MCF 10A (cell line): ENCODE measurements at regions of chr19 and their contacts with region 1.

Region 1: DNA sequence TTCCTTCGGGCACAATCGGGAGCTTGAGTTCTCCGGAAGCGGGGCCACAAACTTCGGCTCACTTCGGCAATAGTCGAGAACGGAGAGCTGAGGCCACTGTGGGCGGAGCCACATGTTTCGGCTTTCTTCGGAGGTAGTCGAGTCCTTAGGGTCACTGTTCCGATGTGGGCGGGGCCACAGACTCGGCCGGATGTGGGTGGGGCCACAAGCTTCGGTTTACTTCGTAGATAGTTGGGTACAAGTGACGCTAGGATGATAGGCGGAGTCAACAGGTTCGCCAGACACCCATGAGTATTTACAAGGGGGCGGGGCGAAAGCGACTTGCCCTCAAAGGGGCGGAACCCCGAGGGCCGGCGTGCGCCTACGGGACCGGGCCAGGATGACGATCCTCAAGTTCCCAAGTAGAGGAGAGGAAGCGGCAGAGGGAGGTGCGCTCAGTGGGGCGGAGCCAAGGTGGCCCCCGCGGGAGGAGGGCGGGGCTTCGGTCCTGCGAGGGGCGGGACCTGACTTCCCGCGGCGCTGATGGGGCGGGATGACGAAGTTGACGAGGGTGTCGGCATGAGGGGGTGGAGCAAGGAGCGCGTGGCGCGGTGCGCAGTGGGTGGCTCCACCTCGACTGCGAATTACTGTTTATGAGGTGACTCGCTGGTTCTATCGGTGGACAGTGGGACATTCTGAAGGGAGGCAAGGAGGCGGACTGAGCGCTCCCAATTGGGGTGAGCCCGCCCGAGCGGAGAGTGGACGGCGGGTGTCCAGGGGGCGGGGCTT is 539 bp upstream of the MBOAT7 start:
- DNase-seq: peak; percentile 100
- H3K4me3 Mint-ChIP-seq: peak overlapping the region; percentile 85
- H3K27ac Mint-ChIP-seq: peak overlapping the region; percentile 100
- H3K4me1 Mint-ChIP-seq: peaks cover 20% of the 10 kb centered on the region
- H3K27me3 Mint-ChIP-seq: no peaks in the 10 kb centered on the region
- CTCF ChIP-seq: no peak

Region 2: DNA sequence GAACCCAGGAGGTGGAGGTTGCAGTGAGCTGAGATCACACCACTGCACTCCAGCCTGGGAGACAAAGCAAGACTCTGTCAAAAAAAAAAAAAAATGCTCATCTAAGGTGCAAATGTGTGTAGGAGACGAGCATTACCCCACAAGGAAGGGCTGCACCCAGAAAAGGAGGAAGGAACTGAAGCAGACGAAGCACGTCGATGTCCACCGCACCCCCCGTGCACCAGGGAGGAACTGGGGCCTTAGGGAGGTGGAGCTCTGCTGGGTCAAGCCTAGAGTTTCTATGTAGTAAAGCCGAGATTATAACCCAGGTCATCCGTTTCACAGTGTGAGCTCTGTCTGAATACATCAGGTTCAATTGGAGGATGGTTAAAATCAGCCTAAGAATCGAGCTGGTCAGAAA is 127.3 kb before region 1 on chr19:
- CTCF ChIA-PET with region 1: no interaction called
- POLR2A ChIA-PET with region 1: no interaction called
- intact Hi-C with region 1: no loop called
- DNase-seq: no peak
- H3K4me3 Mint-ChIP-seq: no peak overlapping the region
- H3K27ac Mint-ChIP-seq: no peak overlapping the region
- H3K4me1 Mint-ChIP-seq: no peaks in the 10 kb centered on the region
- H3K27me3 Mint-ChIP-seq: no peaks in the 10 kb centered on the region
- CTCF ChIP-seq: no peak

Region 3: DNA sequence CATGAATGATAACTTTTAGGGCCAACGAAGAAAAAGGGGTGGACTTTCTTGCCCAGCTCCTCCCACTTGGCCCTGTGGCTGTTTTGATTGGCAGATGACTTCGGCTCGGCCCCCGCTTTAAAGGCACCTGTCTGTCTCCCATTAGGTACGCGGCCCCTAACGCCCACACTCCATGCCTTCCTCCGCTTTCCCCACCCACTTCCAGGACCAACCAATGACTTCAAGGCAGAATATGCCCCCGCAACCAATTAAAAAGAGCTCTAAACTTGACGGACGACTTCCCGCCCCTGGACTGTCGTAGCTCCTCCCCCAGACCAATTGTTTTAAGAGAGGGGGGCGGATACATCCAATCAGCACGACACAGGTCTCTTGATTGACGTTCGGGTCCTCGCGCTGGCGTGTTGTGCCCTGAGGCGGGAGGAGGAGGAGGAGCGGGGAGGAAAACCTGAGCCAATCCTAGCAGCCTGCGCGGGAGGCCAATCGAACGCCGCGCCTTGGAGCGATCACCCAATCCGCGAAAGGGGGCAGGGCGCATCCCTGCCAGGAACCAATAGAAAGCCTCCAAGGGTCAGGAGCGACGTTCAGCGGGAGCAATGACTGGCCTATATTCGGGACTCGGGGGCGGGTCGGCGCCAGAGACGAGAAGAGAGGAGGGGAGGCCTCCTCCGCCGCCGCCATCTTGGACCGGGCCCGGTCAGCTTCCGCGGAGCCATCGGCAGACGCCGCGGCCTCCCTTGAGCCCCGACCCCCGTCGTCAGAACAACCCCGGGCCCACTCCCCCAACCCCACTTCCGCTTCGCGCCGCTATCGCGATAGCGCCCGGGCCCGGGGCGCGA is 52.6 kb before region 1 on chr19 and contains the start of gene CNOT3:
- CTCF ChIA-PET with region 1: interaction called, 3 read pairs
- POLR2A ChIA-PET with region 1: interaction called, 51 read pairs
- intact Hi-C with region 1: loop called (anchors 2 kb)
- DNase-seq: peak; percentile 100
- H3K4me3 Mint-ChIP-seq: peak within 1 kb of the TSS; percentile 79
- H3K27ac Mint-ChIP-seq: peak within 1 kb of the TSS; percentile 92
- H3K4me1 Mint-ChIP-seq: peaks cover 25% of the 10 kb centered on the region
- H3K27me3 Mint-ChIP-seq: no peaks in the 10 kb centered on the region
- CTCF ChIP-seq: no peak
- total RNA-seq, gene CNOT3: 63.2 and 80.5 TPM in 2 replicates

Region 4: GRCh38 chr19:54168174-54168917 is 21.6 kb before region 1 on chr19:
- CTCF ChIA-PET with region 1: interaction called, 12 read pairs
- POLR2A ChIA-PET with region 1: interaction called, 24 read pairs
- intact Hi-C with region 1: no loop called
- DNase-seq: peak; percentile 86
- H3K4me3 Mint-ChIP-seq: no peak overlapping the region
- H3K27ac Mint-ChIP-seq: no peak overlapping the region
- H3K4me1 Mint-ChIP-seq: peaks cover 6% of the 10 kb centered on the region
- H3K27me3 Mint-ChIP-seq: no peaks in the 10 kb centered on the region
- CTCF ChIP-seq: peak; percentile 82

Region 5: DNA sequence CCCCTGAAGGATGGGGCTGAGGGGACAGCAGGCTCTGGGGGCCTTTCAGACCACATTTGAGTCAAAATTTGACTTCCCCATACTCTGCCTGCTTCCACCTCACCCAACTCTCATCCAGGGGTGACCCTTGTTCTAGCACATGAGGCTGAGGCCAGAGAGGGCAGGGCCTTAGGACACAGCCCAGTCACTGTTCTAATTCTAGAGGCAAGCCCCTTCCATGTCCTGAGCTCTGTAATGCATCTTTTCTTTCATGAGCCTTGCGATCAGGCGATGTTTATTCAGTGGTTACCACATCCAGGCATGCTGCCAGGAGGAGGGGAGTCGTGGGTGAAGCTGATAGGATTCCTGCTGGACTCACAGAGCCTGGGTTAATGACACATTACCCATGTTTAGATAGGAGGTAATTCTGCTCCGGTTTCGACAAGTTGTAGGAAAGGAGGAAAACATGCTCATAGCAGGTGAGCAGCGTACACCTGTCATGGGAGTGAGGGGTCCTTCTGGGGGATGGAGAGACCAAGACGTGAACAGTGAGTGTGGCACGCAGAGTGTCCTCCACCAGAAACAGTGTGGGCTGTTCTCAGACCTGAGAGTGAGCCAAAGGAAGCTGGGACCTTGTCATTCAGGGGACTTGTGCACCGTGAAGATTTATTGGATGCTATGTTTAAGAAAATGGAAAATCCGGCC is 20.0 kb after region 1 on chr19:
- CTCF ChIA-PET with region 1: interaction called, 4 read pairs
- POLR2A ChIA-PET with region 1: interaction called, 324 read pairs
- intact Hi-C with region 1: no loop called
- DNase-seq: peak; percentile 100
- H3K4me3 Mint-ChIP-seq: peak overlapping the region; percentile 55
- H3K27ac Mint-ChIP-seq: peak overlapping the region; percentile 87
- H3K4me1 Mint-ChIP-seq: peaks cover 39% of the 10 kb centered on the region
- H3K27me3 Mint-ChIP-seq: no peaks in the 10 kb centered on the region
- CTCF ChIP-seq: no peak

Region 6: GRCh38 chr19:54448774-54449700 is 259.1 kb after region 1 on chr19 and contains the start of gene LENG8:
- CTCF ChIA-PET with region 1: no interaction called
- POLR2A ChIA-PET with region 1: interaction called, 12 read pairs
- intact Hi-C with region 1: no loop called
- DNase-seq: peak; percentile 97
- H3K4me3 Mint-ChIP-seq: peak within 1 kb of the TSS; percentile 97
- H3K27ac Mint-ChIP-seq: peak within 1 kb of the TSS; percentile 99
- H3K4me1 Mint-ChIP-seq: peaks cover 28% of the 10 kb centered on the region
- H3K27me3 Mint-ChIP-seq: no peaks in the 10 kb centered on the region
- CTCF ChIP-seq: no peak
- total RNA-seq, gene LENG8: 238 and 249 TPM in 2 replicates